ENCODE measurements at regions of chr15 and their contacts with region 1.

Region 1: DNA sequence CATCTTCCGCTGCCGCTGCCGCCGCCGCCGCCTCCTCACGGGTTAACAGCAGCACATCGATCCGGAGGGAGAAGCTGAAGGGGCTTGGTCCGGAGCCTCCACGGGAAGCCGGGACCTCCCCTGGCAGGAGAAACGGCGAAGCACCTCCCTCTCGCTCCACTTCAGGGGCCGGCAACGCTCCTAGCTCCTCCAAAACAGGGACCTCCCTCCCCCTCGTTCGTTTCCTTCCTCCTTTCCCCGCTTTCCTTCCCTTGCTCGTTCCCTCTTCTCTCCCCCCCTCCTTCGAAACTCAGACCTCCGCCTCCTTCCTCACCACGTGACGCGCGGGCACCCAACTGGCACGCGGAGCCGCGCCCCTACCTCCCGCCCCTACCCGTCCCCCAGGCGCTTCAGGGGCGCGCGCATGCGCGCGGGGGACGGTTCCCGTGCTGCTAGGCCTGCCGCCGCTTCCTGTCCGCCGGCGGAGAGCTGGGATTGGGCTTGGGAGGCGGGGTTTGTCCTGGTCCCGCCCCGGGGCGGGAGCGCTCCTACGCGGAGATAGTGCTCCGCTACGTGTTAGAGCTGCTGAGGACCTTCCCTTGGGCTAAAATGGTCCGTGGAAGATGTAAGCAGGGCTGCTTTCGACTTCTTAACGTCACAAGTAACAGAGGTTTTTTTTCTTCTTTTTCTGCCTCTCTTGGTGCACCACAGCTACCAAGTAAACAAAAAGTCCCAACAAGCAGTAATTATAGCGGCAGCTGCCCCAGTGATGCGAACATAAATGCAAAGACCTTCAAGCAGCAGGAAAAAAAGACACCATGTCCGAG is at the start of gene ADAM10:
- DNase-seq: peak; percentile 99
- H3K4me3 Mint-ChIP-seq: peak within 1 kb of the TSS; percentile 96
- H3K27ac Mint-ChIP-seq: peak within 1 kb of the TSS; percentile 93
- H3K4me1 Mint-ChIP-seq: peaks cover 41% of the 10 kb centered on the region
- H3K27me3 Mint-ChIP-seq: peaks cover 5% of the 10 kb centered on the region
- total RNA-seq, gene ADAM10: 147 to 150 TPM

Region 2: GRCh38 chr15:58484791-58485600 is 264.7 kb before region 1 on chr15:
- CTCF ChIA-PET with region 1: no interaction called
- POLR2A ChIA-PET with region 1: interaction called, 11 read pairs
- DNase-seq: peak; percentile 80
- H3K4me3 Mint-ChIP-seq: peak overlapping the region; percentile 40
- H3K27ac Mint-ChIP-seq: peak overlapping the region; percentile 95
- H3K4me1 Mint-ChIP-seq: peaks cover 56% of the 10 kb centered on the region
- H3K27me3 Mint-ChIP-seq: no peaks in the 10 kb centered on the region